Activated naive CD4-positive, alpha-beta T cell treated with anti-CD3 and anti-CD28 coated beads for 36 hours (primary cell): ENCODE measurements at regions of chr6 and their contacts with region 1.

Region 1: GRCh38 chr6:136783495-136784270 is 8.6 kb downstream of the MAP3K5 start:
- DNase-seq: no peak
- H3K4me3 Mint-ChIP-seq: no peak overlapping the region
- H3K27ac Mint-ChIP-seq: no peak overlapping the region
- H3K4me1 Mint-ChIP-seq: peaks cover 58% of the 10 kb centered on the region
- H3K27me3 Mint-ChIP-seq: no peaks in the 10 kb centered on the region

Region 2: DNA sequence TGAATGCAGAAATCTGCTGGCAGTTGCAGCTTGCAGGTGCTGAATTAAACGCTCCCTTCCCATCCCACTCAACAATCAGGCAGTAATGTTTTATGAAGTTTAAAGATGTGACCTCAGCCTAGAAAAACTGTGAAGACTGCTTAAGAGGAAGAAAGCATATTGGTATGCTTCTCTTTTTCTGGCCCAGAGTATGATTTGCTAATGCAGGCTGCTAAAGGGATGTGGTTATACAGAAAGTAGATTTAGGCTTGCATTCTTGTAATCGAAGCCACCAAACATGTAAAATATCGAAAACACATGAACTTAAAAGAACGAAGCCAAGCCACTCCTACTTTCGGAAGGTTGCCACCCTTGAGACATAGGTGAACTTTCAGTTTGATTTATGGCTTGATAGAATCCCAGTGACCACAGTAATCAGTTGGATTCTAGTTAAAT is 32.1 kb before region 1 on chr6:
- CTCF ChIA-PET with region 1: interaction called, 7 read pairs
- intact Hi-C with region 1: loop called (anchors 1 kb)
- DNase-seq: peak; percentile 55
- H3K4me3 Mint-ChIP-seq: peak overlapping the region; percentile 23
- H3K27ac Mint-ChIP-seq: peak overlapping the region; percentile 74
- H3K4me1 Mint-ChIP-seq: peaks cover 67% of the 10 kb centered on the region
- H3K27me3 Mint-ChIP-seq: no peaks in the 10 kb centered on the region

Region 3: DNA sequence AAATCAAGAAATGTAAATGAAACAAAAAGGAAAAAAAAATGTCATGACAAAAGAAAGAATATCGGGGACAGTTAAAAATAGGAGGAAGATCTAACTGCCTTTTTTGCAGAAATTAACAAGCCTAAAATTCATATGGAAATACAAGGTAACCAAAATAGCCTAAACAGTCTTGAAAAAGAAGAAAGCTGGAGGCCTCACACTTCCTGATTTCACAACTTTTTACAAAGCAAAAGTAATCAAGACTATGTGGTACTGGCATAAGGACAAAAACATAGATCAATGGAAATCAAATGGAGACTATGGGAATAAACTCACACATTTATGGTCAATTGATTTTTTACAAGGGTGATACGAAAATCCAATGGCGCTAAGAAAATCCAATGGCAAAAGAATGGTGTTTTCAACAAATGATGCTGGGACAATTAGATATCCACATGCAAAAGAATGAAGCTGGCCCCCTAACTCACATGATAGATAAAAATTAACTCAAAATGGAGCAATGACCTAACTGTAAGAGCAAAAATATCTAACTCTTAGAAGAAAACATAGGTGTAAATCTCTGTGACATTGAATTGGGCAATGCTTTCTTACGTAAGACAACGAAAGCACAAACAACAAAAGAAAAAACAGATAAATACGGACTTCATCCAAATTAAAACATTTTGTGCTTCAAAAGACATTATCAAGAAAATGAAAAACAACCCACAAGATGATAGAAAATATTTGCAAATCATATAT is 15.9 kb before region 1 on chr6:
- CTCF ChIA-PET with region 1: interaction called, 4 read pairs
- intact Hi-C with region 1: loop called (anchors 2 kb)
- DNase-seq: no peak
- H3K4me3 Mint-ChIP-seq: no peak overlapping the region
- H3K27ac Mint-ChIP-seq: no peak overlapping the region
- H3K4me1 Mint-ChIP-seq: peaks cover 52% of the 10 kb centered on the region
- H3K27me3 Mint-ChIP-seq: no peaks in the 10 kb centered on the region

Region 4: DNA sequence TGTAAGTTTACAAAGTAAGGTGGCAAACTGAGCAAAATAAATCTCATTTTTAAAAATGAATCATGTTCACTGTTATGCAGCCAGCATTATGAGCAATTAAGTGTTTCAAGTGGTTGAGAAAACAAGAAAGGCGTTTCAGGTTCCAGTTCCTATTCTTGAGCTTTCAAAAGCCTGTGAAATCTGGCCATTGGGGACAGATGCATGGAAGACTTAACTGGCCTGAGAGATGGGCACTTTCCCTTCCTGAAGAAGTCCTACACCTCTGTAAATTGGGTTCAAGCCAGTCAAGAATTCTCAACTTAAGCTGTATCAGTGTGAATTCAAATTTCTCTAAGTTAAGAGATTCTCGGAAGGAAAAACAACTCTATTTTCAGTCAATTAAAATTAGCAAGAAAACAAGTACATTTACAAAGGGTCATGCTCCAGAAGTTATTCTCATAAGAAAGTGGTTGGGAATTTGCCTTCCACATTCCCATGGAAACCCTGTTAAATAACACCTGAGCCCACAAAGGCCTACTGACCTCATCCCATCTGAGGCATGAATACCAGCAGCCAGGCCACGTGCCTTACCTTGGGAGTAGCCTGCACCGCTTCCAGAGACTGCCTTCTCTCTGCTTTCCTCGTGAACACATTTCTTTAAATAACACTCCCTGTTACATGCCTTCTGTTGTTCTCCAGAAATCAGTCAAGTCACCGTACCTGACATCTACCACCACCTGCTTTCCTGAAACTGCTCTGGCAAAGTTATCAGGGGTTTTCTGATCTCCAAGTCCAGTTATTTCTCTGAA is 10.8 kb before region 1 on chr6:
- CTCF ChIA-PET with region 1: interaction called, 3 read pairs
- intact Hi-C with region 1: loop called (anchors 1 kb)
- DNase-seq: no peak
- H3K4me3 Mint-ChIP-seq: no peak overlapping the region
- H3K27ac Mint-ChIP-seq: no peak overlapping the region
- H3K4me1 Mint-ChIP-seq: peaks cover 39% of the 10 kb centered on the region
- H3K27me3 Mint-ChIP-seq: no peaks in the 10 kb centered on the region

Region 5: DNA sequence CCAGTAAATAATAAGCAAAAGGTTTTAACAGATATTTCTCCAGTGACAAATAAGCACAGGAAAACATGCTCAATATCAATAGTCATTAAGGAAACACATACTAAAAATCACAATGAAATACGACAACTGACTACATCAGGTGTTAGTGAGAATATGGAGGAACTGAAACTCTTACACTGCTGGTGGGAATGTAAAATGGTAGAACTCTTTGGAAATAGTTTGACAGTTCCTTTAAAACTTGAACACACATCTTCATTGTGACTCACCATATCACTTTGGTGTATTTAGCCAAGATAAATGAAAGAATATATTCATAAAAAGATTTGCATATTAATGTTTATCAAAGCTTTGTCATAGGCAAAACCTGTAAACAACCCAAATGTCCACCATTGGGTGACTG is 19.9 kb after region 1 on chr6:
- CTCF ChIA-PET with region 1: no interaction called
- intact Hi-C with region 1: no loop called
- DNase-seq: no peak
- H3K4me3 Mint-ChIP-seq: no peak overlapping the region
- H3K27ac Mint-ChIP-seq: no peak overlapping the region
- H3K4me1 Mint-ChIP-seq: no peaks in the 10 kb centered on the region
- H3K27me3 Mint-ChIP-seq: no peaks in the 10 kb centered on the region